Activated B cell treated with CpG ODN at 0.5 μM for 24 hours (primary cell): ENCODE measurements at regions of chr2 and their contacts with region 1.

Region 1: DNA sequence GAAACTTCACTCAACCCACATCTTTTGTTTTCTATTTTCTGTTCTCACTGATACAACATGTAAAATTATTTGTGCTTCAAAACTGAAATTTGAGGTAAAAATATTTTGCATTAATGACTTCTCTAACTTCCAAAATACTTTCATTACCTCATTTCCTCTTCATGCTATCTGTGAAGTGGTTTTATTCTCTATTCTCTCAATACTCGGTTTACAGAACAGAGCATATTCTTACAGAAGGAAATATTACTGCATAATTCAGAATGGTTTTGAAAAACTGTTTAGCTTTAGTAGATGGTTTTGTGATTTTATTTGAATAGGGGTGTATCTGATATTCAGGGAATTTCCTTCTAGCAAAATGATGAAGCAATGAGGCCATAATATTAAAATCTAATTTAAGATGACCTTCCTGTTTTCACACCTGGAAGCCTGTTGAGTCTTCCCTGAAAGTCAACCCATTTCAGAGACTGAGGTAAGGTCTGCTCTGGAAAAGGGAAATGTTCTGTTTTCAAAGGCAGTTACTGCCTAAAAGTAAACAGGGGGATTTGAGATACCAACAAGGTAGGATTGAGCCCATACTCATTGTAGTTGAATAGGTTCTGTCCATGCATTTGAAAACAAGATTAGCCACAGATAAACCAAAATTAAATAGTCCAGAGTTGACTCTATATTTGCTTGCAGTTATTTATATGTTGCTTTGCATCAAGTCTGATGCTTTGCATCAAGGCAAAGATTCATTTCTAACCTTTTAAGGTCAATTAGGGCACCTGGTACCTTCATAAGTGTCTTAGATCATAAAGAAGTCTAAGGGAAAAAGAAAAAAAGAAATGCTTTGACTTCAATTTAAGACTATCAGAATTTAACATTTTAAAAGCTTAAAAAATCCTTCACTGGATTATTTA is 50.8 kb upstream of the PEX13 start:
- DNase-seq: no peak
- ATAC-seq: peak; percentile 41
- H3K4me3 Mint-ChIP-seq: peak overlapping the region; percentile 83
- H3K27ac Mint-ChIP-seq: peak overlapping the region; percentile 87
- H3K4me1 Mint-ChIP-seq: peaks cover 84% of the 10 kb centered on the region
- H3K27me3 Mint-ChIP-seq: no peaks in the 10 kb centered on the region
- CTCF ChIP-seq: no peak

Region 2: GRCh38 chr2:60934165-60934722 is 32.5 kb before region 1 on chr2:
- CTCF ChIA-PET with region 1: no interaction called
- POLR2A ChIA-PET with region 1: interaction called, 5 read pairs
- intact Hi-C with region 1: loop called (anchors 5 kb)
- DNase-seq: no peak
- ATAC-seq: no peak
- H3K4me3 Mint-ChIP-seq: no peak overlapping the region
- H3K27ac Mint-ChIP-seq: peak overlapping the region; percentile 6
- H3K4me1 Mint-ChIP-seq: peaks cover 50% of the 10 kb centered on the region
- H3K27me3 Mint-ChIP-seq: no peaks in the 10 kb centered on the region
- CTCF ChIP-seq: no peak

Region 3: GRCh38 chr2:60948926-60949579 is 17.7 kb before region 1 on chr2:
- CTCF ChIA-PET with region 1: interaction called, 3 read pairs
- POLR2A ChIA-PET with region 1: interaction called, 7 read pairs
- intact Hi-C with region 1: loop called (anchors 2 kb)
- DNase-seq: no peak
- ATAC-seq: no peak
- H3K4me3 Mint-ChIP-seq: no peak overlapping the region
- H3K27ac Mint-ChIP-seq: no peak overlapping the region
- H3K4me1 Mint-ChIP-seq: peaks cover 7% of the 10 kb centered on the region
- H3K27me3 Mint-ChIP-seq: no peaks in the 10 kb centered on the region
- CTCF ChIP-seq: no peak

Region 4: GRCh38 chr2:60984720-60985119 is 18.0 kb after region 1 on chr2:
- CTCF ChIA-PET with region 1: interaction called, 3 read pairs
- POLR2A ChIA-PET with region 1: interaction called, 85 read pairs
- intact Hi-C with region 1: no loop called
- DNase-seq: no peak
- ATAC-seq: peak; percentile 81
- H3K4me3 Mint-ChIP-seq: peak overlapping the region; percentile 50
- H3K27ac Mint-ChIP-seq: peak overlapping the region; percentile 79
- H3K4me1 Mint-ChIP-seq: peaks cover 48% of the 10 kb centered on the region
- H3K27me3 Mint-ChIP-seq: no peaks in the 10 kb centered on the region
- CTCF ChIP-seq: no peak

Region 5: DNA sequence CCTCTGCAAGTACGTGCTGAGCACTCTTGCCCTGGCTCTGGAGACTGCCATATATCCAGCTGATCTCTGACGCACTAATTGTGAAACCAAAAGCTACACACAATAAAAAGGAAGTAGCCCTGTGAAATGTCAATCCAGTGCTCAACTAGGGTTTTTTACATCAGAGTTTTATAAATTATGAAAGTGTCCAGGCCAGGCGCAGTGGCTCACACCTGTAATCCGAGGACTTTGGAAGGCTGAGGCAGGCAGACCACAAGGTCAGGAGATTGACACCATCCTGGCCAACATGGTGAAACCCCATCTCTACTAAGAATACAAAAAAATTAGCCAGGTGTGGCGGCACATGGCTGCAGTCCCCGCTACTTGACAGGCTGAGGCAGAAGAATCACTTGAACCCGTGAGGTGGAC is 26.2 kb after region 1 on chr2:
- CTCF ChIA-PET with region 1: interaction called, 11 read pairs
- POLR2A ChIA-PET with region 1: interaction called, 85 read pairs
- intact Hi-C with region 1: loop called (anchors 1 kb)
- DNase-seq: peak; percentile 41
- ATAC-seq: peak; percentile 94
- H3K4me3 Mint-ChIP-seq: peak overlapping the region; percentile 66
- H3K27ac Mint-ChIP-seq: peak overlapping the region; percentile 98
- H3K4me1 Mint-ChIP-seq: peaks cover 75% of the 10 kb centered on the region
- H3K27me3 Mint-ChIP-seq: no peaks in the 10 kb centered on the region
- CTCF ChIP-seq: no peak

Region 6: DNA sequence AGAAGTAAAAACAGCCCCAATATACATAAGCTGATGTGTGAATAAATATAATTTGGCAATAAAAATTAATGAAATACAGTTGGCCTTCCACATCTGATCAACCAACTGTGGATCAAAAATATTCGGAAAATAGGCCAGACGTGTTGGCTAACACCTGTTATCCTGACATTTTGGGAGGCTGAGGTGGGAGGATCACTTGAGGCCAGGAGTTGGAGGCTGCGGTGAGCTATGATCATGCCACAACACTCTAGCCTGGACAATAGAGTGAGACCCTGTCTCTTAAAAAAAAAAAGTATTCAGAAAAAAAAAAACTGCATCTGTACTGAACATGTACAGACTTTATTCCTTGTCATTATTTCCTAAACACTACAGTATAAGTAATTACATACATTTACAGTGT is 62.8 kb after region 1 on chr2:
- CTCF ChIA-PET with region 1: no interaction called
- POLR2A ChIA-PET with region 1: no interaction called
- intact Hi-C with region 1: no loop called
- DNase-seq: no peak
- ATAC-seq: no peak
- H3K4me3 Mint-ChIP-seq: no peak overlapping the region
- H3K27ac Mint-ChIP-seq: no peak overlapping the region
- H3K4me1 Mint-ChIP-seq: peaks cover 3% of the 10 kb centered on the region
- H3K27me3 Mint-ChIP-seq: no peaks in the 10 kb centered on the region
- CTCF ChIP-seq: no peak

Region 7: DNA sequence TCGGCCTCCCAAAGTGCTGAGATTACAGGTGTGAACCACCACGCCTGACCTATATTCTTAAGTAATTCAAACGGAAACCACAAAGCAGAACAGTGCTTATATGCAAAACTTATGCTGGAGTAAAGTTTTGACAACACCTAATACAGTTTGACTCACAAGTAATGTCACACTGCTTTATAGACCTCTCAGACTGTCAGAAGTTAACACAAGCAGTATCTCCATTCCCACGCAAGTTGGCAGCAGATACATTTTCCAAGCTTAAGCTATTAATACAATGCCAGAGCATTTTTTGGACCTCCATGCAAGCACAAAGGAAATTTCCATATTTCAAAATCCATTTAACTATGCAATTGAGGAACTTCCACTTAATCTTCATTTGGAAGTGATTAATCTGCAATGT is 77.9 kb after region 1 on chr2:
- CTCF ChIA-PET with region 1: no interaction called
- POLR2A ChIA-PET with region 1: no interaction called
- intact Hi-C with region 1: no loop called
- DNase-seq: no peak
- ATAC-seq: peak; percentile 58
- H3K4me3 Mint-ChIP-seq: no peak overlapping the region
- H3K27ac Mint-ChIP-seq: no peak overlapping the region
- H3K4me1 Mint-ChIP-seq: peaks cover 17% of the 10 kb centered on the region
- H3K27me3 Mint-ChIP-seq: no peaks in the 10 kb centered on the region
- CTCF ChIP-seq: no peak